ENCODE measurements at regions of chr20 and their contacts with region 1.

Region 1: GRCh38 chr20:41028348-41029148 is at the start of gene TOP1:
- DNase-seq: peak; percentile 99
- H3K4me3 ChIP-seq: peak within 1 kb of the TSS; percentile 68 to 99
- H3K27ac ChIP-seq: peak within 1 kb of the TSS; percentile 79 to 86
- H3K4me1 ChIP-seq: peaks cover 20 to 36% of the 10 kb centered on the region in 2 experiments; a peak in 3 of 4 replicates
- H3K27me3 ChIP-seq: no peaks in the 10 kb centered on the region
- CTCF ChIP-seq: no peak
- EP300 ChIP-seq: no peak
- RAD21 ChIP-seq: no peak; the same call in 1 of the 2 replicates
- polyA plus RNA-seq, gene TOP1: 8.9 and 11.9 TPM in 2 replicates

Region 2: GRCh38 chr20:41052732-41053388 is 24.3 kb after region 1 on chr20:
- CTCF ChIA-PET with region 1: no interaction called
- POLR2A ChIA-PET with region 1: no interaction called
- DNase-seq: no peak
- H3K4me3 ChIP-seq: no peak overlapping the region
- H3K27ac ChIP-seq: peak overlapping the region in 1 of 2 experiments; percentile 24; a peak in 2 of 4 replicates
- H3K4me1 ChIP-seq: peaks cover 24 to 69% of the 10 kb centered on the region in 2 experiments; a peak in 3 of 4 replicates
- H3K27me3 ChIP-seq: no peaks in the 10 kb centered on the region
- CTCF ChIP-seq: no peak
- EP300 ChIP-seq: no peak
- RAD21 ChIP-seq: no peak

Region 3: DNA sequence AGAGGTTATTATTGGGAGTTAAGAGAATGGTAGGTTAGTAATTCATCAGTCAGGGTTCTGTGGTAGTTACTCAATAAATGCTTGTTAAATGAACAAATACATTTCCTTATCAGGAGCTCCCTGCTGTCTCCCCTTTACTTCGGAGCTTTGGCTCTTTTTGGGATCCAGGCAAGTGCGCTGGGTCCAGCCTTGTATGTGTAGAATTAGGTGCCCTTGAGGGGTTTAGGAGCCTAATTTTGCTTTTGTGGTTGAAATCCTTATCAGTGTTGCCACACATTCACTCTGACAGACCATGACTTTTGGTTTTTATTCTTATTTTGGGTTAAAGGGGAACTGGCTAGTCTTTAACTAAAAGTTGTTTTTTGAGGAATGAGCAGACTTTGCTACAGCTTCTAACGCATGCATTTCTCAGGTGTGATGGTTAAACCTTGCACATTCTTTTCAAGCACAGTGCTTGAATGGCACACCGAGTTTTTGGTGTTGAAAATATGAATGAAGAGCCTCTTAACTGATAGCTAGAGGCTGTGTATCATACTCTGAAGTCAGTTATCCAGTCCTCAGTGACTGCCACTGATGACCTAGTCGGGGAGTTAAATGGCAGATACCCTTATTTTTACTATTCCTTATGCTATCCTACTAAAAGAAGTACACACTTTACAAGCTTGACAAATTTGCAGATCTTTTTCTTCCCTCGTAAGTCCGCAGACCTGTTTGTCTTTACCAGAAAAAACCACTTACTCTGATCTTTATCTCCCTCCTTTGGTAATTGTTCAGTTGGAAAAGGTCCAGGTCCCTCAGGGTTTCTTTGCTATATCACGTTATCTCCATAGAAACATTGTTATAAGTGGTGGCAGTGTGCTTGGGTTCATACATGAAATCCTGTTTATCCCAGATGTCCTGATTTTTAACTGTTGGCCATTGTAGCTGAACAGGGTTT is 58.1 kb after region 1 on chr20:
- CTCF ChIA-PET with region 1: interaction called, 4 read pairs
- POLR2A ChIA-PET with region 1: interaction called, 12 read pairs
- DNase-seq: peak; percentile 76
- H3K4me3 ChIP-seq: no peak overlapping the region; a peak in 1 of 4 replicates
- H3K27ac ChIP-seq: peak overlapping the region; percentile 32 to 98; a peak in 3 of 4 replicates
- H3K4me1 ChIP-seq: peaks cover 0 to 19% of the 10 kb centered on the region in 2 experiments; a peak in 2 of 4 replicates
- H3K27me3 ChIP-seq: no peaks in the 10 kb centered on the region
- CTCF ChIP-seq: no peak
- EP300 ChIP-seq: peak in 1 of 2 experiments; percentile 94; a peak in 2 of 4 replicates
- RAD21 ChIP-seq: no peak

Measured in SK-N-SH (cell line).